ENCODE measurements at regions of chr10 and their contacts with region 1.

Region 1: DNA sequence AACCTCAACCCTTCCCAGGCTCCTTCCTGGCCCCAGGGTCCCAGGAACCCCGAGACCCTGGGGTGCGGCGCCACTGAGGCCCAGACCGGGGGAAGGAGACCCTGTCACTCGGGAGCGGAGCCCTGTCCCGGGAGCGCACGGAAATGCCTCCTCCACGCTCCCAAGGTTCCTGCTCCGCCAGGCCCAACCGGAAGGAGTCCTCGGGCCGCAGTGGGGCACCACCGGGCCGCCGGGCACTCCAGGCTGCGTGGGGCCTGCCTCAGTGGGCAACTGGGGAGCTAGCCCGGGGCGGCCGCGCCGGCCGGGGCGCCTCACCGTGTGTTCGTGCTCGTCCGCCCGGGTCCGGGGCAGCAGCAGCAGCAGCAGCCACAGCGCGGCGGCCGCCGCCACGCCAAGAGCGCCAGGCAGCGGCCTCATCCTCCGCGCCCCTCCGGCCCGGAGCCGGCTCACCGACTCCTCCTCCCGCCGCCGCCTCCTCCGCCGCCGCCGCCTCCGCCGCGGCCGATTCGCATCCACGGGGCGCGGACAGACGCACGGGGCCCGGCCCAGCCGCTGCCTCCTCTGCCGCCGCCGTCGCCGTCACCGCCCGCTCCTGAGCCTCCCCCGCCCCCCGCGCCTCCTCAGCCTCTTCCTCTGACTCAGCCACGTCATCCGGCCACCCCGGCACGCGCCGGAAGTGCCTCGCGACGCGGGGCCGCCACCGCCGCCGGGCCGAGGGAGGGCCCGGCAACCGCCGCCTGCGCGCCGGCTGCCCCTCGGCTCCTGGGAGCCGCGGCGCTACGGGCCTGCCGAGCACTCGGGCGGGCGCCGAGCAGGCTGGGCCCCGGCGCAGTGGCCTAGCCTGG is at the start of gene TM9SF3:
- DNase-seq: peak; percentile 96
- H3K4me3 ChIP-seq: peak within 1 kb of the TSS; percentile 76 to 95 (median 83)
- H3K27ac ChIP-seq: peak within 1 kb of the TSS; percentile 96 to 99 (median 96)
- H3K4me1 ChIP-seq: peaks cover 0 to 57% (median 53%) of the 10 kb centered on the region in 4 donors
- H3K27me3 ChIP-seq: no peaks in the 10 kb centered on the region
- CTCF ChIP-seq: no peak
- EP300 ChIP-seq: no peak
- POLR2A ChIP-seq: peak in 1 of 2 donors; percentile 16
- total RNA-seq, gene TM9SF3: 104 to 115 (median 108) TPM

Region 2: DNA sequence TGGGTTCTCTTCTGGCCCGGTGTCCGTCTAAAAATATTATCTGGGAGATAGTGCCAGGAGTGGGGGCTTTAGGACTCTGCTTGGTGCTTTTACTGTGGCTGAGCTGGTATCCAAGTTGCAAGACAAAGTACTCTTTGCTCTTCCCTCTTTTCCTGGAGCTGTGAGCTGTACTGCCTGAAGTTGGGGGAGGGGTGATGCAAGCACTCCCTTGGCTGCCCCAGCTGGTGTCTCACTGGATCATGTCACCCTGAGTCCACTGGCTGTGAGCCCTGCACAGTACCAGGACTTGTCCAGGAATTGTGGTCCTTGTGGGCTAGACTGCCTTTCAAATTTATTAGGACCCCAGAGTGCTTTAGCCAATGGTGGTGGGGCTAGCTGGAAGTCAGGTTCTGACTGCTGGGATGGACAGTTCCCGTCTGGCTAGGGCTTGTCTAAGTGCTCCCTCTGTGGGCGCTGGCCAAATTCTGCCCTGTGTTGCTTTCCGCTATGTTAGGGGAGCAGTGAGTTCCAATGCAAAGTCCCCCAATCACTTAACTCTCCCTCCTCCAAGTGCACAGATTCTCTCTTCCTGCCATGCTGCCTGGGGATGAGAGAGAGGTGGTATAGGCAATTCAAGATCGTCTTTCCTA is 665.7 kb before region 1 on chr10:
- intact Hi-C with region 1: no loop called
- DNase-seq: no peak
- H3K4me3 ChIP-seq: no peak overlapping the region
- H3K27ac ChIP-seq: no peak overlapping the region
- H3K4me1 ChIP-seq: no peaks in the 10 kb centered on the region
- H3K27me3 ChIP-seq: no peaks in the 10 kb centered on the region
- CTCF ChIP-seq: no peak
- EP300 ChIP-seq: no peak
- POLR2A ChIP-seq: no peak

Region 3: DNA sequence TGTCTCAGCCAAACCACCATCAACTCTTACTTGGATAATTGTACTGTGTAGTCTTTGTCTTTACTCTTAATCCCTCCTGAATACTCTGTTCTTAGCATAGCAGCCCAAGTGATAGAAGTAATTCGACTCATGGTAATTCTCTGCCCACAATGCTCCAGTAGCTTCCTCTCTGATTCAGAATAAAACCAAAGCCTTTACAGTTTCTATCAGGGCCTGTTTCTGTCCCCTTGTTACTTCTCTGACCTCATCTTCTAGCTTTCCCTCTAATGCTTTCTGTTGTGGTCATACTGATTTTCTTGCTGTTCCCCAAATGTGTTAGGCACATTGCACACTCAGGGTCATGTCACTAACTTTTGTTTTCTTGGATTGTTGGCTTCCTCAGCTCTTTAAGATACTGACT is 448.5 kb before region 1 on chr10:
- intact Hi-C with region 1: no loop called
- DNase-seq: no peak
- H3K4me3 ChIP-seq: no peak overlapping the region
- H3K27ac ChIP-seq: no peak overlapping the region
- H3K4me1 ChIP-seq: no peaks in the 10 kb centered on the region
- H3K27me3 ChIP-seq: no peaks in the 10 kb centered on the region
- CTCF ChIP-seq: no peak
- EP300 ChIP-seq: no peak
- POLR2A ChIP-seq: no peak

Region 4: GRCh38 chr10:96524741-96525140 is 61.9 kb before region 1 on chr10:
- intact Hi-C with region 1: no loop called
- DNase-seq: no peak
- H3K4me3 ChIP-seq: no peak overlapping the region
- H3K27ac ChIP-seq: no peak overlapping the region
- H3K4me1 ChIP-seq: peaks cover 0 to 6% (median 0%) of the 10 kb centered on the region in 4 donors
- H3K27me3 ChIP-seq: no peaks in the 10 kb centered on the region
- CTCF ChIP-seq: no peak
- EP300 ChIP-seq: no peak
- POLR2A ChIP-seq: no peak

Region 5: DNA sequence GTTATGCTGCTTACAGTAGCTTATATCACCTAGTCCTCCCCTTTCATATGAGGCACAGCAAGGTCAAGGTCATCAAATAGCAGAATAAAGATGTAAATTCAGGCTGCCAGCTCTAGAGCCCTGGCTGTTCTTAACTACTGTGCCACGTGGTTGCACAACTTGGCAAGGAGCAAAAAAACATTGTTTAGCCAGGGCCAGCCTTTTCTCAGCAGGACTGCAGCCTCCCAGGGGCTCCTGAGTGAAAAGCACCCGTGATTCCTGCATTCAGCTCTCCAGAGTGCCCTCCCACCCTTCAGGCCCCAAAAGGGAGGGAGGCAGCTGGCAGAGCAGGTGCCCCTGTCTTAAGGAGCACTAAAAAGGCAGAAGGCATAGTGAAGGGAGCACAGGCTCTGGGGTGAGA is 32.0 kb after region 1 on chr10:
- intact Hi-C with region 1: loop called (anchors 2 kb)
- DNase-seq: peak; percentile 75
- H3K4me3 ChIP-seq: no peak overlapping the region
- H3K27ac ChIP-seq: peak overlapping the region in 3 of 4 donors; percentile 66 to 73 (median 67)
- H3K4me1 ChIP-seq: peaks cover 0 to 28% (median 21%) of the 10 kb centered on the region in 4 donors
- H3K27me3 ChIP-seq: no peaks in the 10 kb centered on the region
- CTCF ChIP-seq: no peak
- EP300 ChIP-seq: no peak
- POLR2A ChIP-seq: no peak

Measured in sigmoid colon (tissue), 7 donors.